ENCODE measurements at regions of chr11 and their contacts with region 1.

Region 1: GRCh38 chr11:58837707-58838388 is 6.7 kb downstream of the GLYATL2 start:
- DNase-seq: no peak
- H3K4me3 ChIP-seq: no peak overlapping the region
- CTCF ChIP-seq: no peak
- POLR2A ChIP-seq: no peak

Region 2: DNA sequence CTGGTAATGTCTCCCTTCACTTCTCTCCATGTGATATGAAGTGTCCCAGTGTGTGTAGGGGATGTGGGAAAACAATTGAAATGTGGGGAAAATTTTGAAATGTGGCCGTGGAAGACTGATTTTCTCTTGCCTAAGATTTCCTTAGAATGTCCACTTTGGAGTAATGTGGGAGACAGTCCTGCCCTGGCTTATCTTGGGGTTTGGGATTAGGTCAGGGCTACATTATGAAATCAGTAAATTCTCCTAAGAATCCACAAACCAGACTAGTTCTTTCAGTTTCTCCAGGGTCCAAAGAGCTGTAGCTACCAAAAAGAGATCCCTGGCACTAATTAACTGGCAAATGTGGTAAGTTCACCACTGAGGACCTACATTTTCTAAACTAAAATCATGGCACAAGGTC is 1211.0 kb before region 1 on chr11:
- intact Hi-C with region 1: loop called (anchors 5 kb)
- DNase-seq: no peak
- H3K4me3 ChIP-seq: no peak overlapping the region
- CTCF ChIP-seq: no peak
- POLR2A ChIP-seq: no peak

Region 3: DNA sequence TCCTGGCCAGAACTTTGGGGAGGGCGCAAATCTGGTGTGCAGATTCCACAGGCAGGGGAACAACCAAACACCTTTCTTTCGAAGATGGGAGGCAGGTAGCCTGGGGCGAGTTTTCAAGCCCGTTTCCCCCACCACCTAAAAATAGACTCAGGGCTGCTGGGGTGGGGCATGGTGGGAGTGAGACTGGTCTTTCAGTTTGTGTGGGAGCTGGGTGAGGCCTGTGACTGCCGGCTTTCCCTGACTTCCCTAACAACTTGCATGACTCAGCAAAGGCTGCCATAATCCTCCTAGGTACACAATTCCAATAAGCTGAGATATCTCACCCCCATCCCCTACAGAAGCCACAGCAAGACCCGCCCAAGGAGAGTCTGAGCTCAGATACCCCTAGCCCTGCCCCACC is 391.6 kb before region 1 on chr11:
- intact Hi-C with region 1: no loop called
- DNase-seq: no peak
- H3K4me3 ChIP-seq: no peak overlapping the region
- CTCF ChIP-seq: no peak
- POLR2A ChIP-seq: no peak